K562 (cell line): ENCODE measurements at regions of chr15 and their contacts with region 1.

Region 1: GRCh38 chr15:67303490-67304363 is 49.1 kb downstream of the IQCH start:
- DNase-seq: peak; percentile 16 to 61 (median 24)
- ATAC-seq: peak; percentile 70; the same call in 2 of the 3 replicates
- H3K4me3 ChIP-seq: no peak overlapping the region
- H3K27ac ChIP-seq: no peak overlapping the region
- H3K4me1 ChIP-seq: no peaks in the 10 kb centered on the region
- H3K27me3 ChIP-seq: no peaks in the 10 kb centered on the region
- CTCF ChIP-seq: peak; percentile 48 to 83 (median 51); a peak in 5 of 6 replicates
- EP300 ChIP-seq: no peak
- POLR2A ChIP-seq: no peak
- RAD21 ChIP-seq: peak; percentile 81 to 92

Region 2: GRCh38 chr15:66946578-66947164 is 357.1 kb before region 1 on chr15:
- CTCF ChIA-PET with region 1: interaction called, 50 read pairs
- POLR2A ChIA-PET with region 1: no interaction called
- in situ Hi-C with region 1: loop called (anchors 5 kb)
- intact Hi-C with region 1: loop called (anchors 1 kb)
- DNase-seq: peak; percentile 77 to 85 (median 81)
- ATAC-seq: peak; percentile 89
- H3K4me3 ChIP-seq: no peak overlapping the region
- H3K27ac ChIP-seq: no peak overlapping the region
- H3K4me1 ChIP-seq: peaks cover 0 to 9% of the 10 kb centered on the region in 2 experiments; a peak in 1 of 5 replicates
- H3K27me3 ChIP-seq: peaks cover 0 to 9% of the 10 kb centered on the region in 2 experiments; a peak in 1 of 5 replicates
- CTCF ChIP-seq: peak; percentile 89 to 95 (median 93)
- EP300 ChIP-seq: no peak
- POLR2A ChIP-seq: no peak
- RAD21 ChIP-seq: peak; percentile 94 to 98

Region 3: GRCh38 chr15:67240235-67241131 is 63.2 kb before region 1 on chr15:
- CTCF ChIA-PET with region 1: interaction called, 16 read pairs
- POLR2A ChIA-PET with region 1: interaction called, 3 read pairs
- in situ Hi-C with region 1: no loop called
- intact Hi-C with region 1: no loop called
- DNase-seq: peak in 1 of 4 experiments; percentile 9
- ATAC-seq: peak; percentile 63; the same call in 2 of the 3 replicates
- H3K4me3 ChIP-seq: no peak overlapping the region
- H3K27ac ChIP-seq: no peak overlapping the region
- H3K4me1 ChIP-seq: no peaks in the 10 kb centered on the region
- H3K27me3 ChIP-seq: no peaks in the 10 kb centered on the region
- CTCF ChIP-seq: peak; percentile 36 to 50 (median 38); a peak in 3 of 6 replicates
- EP300 ChIP-seq: no peak
- POLR2A ChIP-seq: no peak
- RAD21 ChIP-seq: peak; percentile 34 to 44

Region 4: GRCh38 chr15:67433495-67434099 is 129.9 kb after region 1 on chr15:
- CTCF ChIA-PET with region 1: no interaction called
- POLR2A ChIA-PET with region 1: no interaction called
- in situ Hi-C with region 1: no loop called
- intact Hi-C with region 1: loop called (anchors 5 kb)
- DNase-seq: peak; percentile 60 to 71 (median 67)
- ATAC-seq: peak; percentile 91
- H3K4me3 ChIP-seq: no peak overlapping the region
- H3K27ac ChIP-seq: no peak overlapping the region
- H3K4me1 ChIP-seq: peaks cover 0 to 5% of the 10 kb centered on the region in 2 experiments; a peak in 2 of 5 replicates
- H3K27me3 ChIP-seq: no peaks in the 10 kb centered on the region
- CTCF ChIP-seq: peak; percentile 81 to 86 (median 82)
- EP300 ChIP-seq: no peak
- POLR2A ChIP-seq: no peak
- RAD21 ChIP-seq: peak; percentile 79 to 88

Region 5: GRCh38 chr15:67587754-67588153 is 284.0 kb after region 1 on chr15:
- CTCF ChIA-PET with region 1: no interaction called
- POLR2A ChIA-PET with region 1: no interaction called
- in situ Hi-C with region 1: no loop called
- intact Hi-C with region 1: no loop called
- DNase-seq: peak in 1 of 4 experiments; percentile 6
- ATAC-seq: no peak
- H3K4me3 ChIP-seq: no peak overlapping the region
- H3K27ac ChIP-seq: no peak overlapping the region
- H3K4me1 ChIP-seq: no peaks in the 10 kb centered on the region
- H3K27me3 ChIP-seq: no peaks in the 10 kb centered on the region
- CTCF ChIP-seq: no peak
- EP300 ChIP-seq: no peak
- POLR2A ChIP-seq: no peak
- RAD21 ChIP-seq: no peak

Region 6: DNA sequence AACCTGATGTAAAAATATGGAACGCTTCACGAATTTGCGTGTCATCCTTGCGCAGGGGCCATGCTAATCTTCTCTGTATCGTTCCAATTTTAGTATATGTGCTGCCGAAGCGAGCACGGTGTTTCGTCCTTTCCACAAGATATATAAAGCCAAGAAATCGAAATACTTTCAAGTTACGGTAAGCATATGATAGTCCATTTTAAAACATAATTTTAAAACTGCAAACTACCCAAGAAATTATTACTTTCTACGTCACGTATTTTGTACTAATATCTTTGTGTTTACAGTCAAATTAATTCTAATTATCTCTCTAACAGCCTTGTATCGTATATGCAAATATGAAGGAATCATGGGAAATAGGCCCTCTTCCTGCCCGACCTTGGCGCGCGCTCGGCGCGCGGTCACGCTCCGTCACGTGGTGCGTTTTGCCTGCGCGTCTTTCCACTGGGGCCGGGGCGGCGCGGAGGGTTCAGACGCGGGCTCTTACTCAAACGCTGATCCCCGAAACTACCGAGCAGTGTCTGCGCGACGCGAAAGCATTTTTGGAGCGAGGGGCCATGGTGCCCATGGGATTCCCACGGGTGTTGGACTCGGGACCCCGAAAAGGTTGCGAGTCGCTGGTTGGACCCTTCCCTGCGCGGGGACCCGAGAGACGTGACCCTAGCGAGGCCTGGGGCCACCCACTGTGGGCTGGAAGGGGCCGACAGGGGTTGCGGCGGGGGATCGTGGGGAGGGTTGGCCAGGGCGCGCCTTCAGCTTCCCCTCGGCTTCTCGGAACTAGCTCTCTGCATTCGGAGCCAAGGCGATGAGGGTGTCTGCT is 536.4 kb after region 1 on chr15 and contains the start of gene RNU6-1:
- CTCF ChIA-PET with region 1: no interaction called
- POLR2A ChIA-PET with region 1: no interaction called
- in situ Hi-C with region 1: no loop called
- intact Hi-C with region 1: loop called (anchors 10 kb)
- DNase-seq: peak; percentile 93 to 96 (median 95)
- ATAC-seq: peak; percentile 87
- H3K4me3 ChIP-seq: peak within 1 kb of the TSS; percentile 66
- H3K27ac ChIP-seq: peak within 1 kb of the TSS; percentile 92
- H3K4me1 ChIP-seq: peaks cover 22 to 36% of the 10 kb centered on the region in 2 experiments
- H3K27me3 ChIP-seq: peaks cover 0 to 10% of the 10 kb centered on the region in 2 experiments; a peak in 4 of 5 replicates
- CTCF ChIP-seq: no peak
- EP300 ChIP-seq: no peak; the same call in 1 of the 2 replicates
- POLR2A ChIP-seq: peak; percentile 95
- RAD21 ChIP-seq: peak in 1 of 2 experiments; percentile 2; a peak in 2 of 4 replicates
- polyA plus RNA-seq, gene RNU6-1: not detected